Naive thymus-derived CD4-positive, alpha-beta T cell (primary cell): ENCODE measurements at regions of chr11 and their contacts with region 1.

Region 1: GRCh38 chr11:16738193-16738946 is at the start of gene C11orf58:
- DNase-seq: peak; percentile 87 to 98 (median 97)
- ATAC-seq: peak; percentile 97
- H3K4me3 ChIP-seq: peak within 1 kb of the TSS; percentile 92
- H3K4me3 Mint-ChIP-seq: peak within 1 kb of the TSS in 5 of 10 donors; percentile 72 to 87 (median 77)
- H3K27ac ChIP-seq: peak within 1 kb of the TSS; percentile 98
- H3K27ac Mint-ChIP-seq: peak within 1 kb of the TSS in 2 of 9 donors; percentile 83 to 97
- H3K4me1 ChIP-seq: peaks cover 28 to 33% of the 10 kb centered on the region in 2 donors
- H3K4me1 Mint-ChIP-seq: peaks cover 6 to 32% (median 21%) of the 10 kb centered on the region in 7 donors
- H3K27me3 ChIP-seq: no peaks in the 10 kb centered on the region
- H3K27me3 Mint-ChIP-seq: peaks cover 0 to 3% (median 0%) of the 10 kb centered on the region in 5 donors
- total RNA-seq, gene C11orf58: 116 to 168 (median 155) TPM

Region 2: GRCh38 chr11:16605894-16606783 is 132.2 kb before region 1 on chr11:
- CTCF ChIA-PET with region 1: no interaction called
- POLR2A ChIA-PET with region 1: interaction called, 5 read pairs
- intact Hi-C with region 1: loop called in 1 of 2 experiments (anchors 1 kb)
- DNase-seq: peak; percentile 57 to 85 (median 79)
- ATAC-seq: peak; percentile 95
- H3K4me3 ChIP-seq: peak overlapping the region; percentile 49
- H3K4me3 Mint-ChIP-seq: peak overlapping the region in 8 of 10 donors; percentile 75 to 90 (median 84)
- H3K27ac ChIP-seq: no peak overlapping the region
- H3K27ac Mint-ChIP-seq: peak overlapping the region in 7 of 9 donors; percentile 11 to 83 (median 34)
- H3K4me1 ChIP-seq: peaks cover 12 to 27% of the 10 kb centered on the region in 2 donors
- H3K4me1 Mint-ChIP-seq: peaks cover 12 to 33% (median 28%) of the 10 kb centered on the region in 7 donors
- H3K27me3 ChIP-seq: peaks cover 6 to 38% of the 10 kb centered on the region in 2 donors
- H3K27me3 Mint-ChIP-seq: peaks cover 47 to 51% (median 50%) of the 10 kb centered on the region in 5 donors

Region 3: DNA sequence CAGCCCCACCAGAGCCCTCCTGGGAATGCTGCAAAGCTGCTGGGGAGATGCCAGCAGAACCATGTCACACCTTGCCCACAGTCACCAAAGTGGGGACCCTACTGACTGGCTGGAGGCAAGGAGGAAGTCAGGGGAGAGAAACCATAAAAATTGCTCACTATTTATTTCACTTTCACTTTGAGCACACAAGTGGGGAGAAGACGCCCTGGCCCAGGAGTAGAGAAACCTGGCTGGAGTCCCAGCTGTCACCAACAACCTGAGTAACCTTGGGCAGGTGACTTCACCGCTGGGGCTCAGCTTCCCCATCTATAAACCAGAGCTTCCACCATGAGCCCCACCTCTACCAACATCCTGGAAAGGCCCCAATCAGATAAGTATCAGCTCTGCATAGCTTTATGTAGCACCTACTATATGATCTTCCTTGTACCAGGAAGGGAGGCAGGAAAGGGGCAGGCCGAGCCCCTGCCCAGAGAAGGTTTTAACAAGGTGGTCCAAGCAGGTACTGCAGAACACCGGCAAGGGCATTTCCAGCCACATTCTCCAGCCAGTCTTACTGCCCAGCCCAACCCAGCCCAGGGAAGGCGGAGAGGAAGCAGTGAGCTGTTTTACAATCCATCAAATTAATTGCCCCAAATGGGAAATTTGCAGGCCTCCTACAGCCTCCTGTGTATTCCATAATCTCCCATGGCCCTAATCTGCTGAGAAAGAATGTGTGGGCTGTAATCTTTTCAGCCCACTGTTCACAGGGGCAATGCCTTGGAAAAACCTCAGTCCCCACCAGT is 248.3 kb after region 1 on chr11:
- CTCF ChIA-PET with region 1: no interaction called
- POLR2A ChIA-PET with region 1: no interaction called
- intact Hi-C with region 1: loop called in 1 of 2 experiments (anchors 1 kb)
- DNase-seq: peak in 7 of 9 donors; percentile 6 to 42 (median 24)
- ATAC-seq: peak; percentile 76
- H3K4me3 ChIP-seq: peak overlapping the region; percentile 27
- H3K4me3 Mint-ChIP-seq: peak overlapping the region in 9 of 10 donors; percentile 9 to 63 (median 56)
- H3K27ac ChIP-seq: no peak overlapping the region
- H3K27ac Mint-ChIP-seq: peak overlapping the region; percentile 56 to 86 (median 71)
- H3K4me1 ChIP-seq: peaks cover 9 to 15% of the 10 kb centered on the region in 2 donors
- H3K4me1 Mint-ChIP-seq: peaks cover 12 to 33% (median 24%) of the 10 kb centered on the region in 7 donors
- H3K27me3 ChIP-seq: no peaks in the 10 kb centered on the region
- H3K27me3 Mint-ChIP-seq: no peaks in the 10 kb centered on the region

Region 4: GRCh38 chr11:17207317-17208258 is 469.2 kb after region 1 on chr11 and contains the start of gene PIK3C2A:
- CTCF ChIA-PET with region 1: no interaction called
- POLR2A ChIA-PET with region 1: interaction called, 3 read pairs
- intact Hi-C with region 1: loop called (anchors 2 kb)
- DNase-seq: peak; percentile 84 to 94 (median 91)
- ATAC-seq: peak; percentile 98
- H3K4me3 ChIP-seq: peak within 1 kb of the TSS; percentile 93
- H3K4me3 Mint-ChIP-seq: peak within 1 kb of the TSS; percentile 90 to 99 (median 98)
- H3K27ac ChIP-seq: peak within 1 kb of the TSS; percentile 93
- H3K27ac Mint-ChIP-seq: peak within 1 kb of the TSS; percentile 87 to 99 (median 97)
- H3K4me1 ChIP-seq: peaks cover 15 to 19% of the 10 kb centered on the region in 2 donors
- H3K4me1 Mint-ChIP-seq: peaks cover 34 to 57% (median 48%) of the 10 kb centered on the region in 7 donors
- H3K27me3 ChIP-seq: no peaks in the 10 kb centered on the region
- H3K27me3 Mint-ChIP-seq: no peaks in the 10 kb centered on the region
- total RNA-seq, gene PIK3C2A: 25.4 to 56.4 (median 42.0) TPM

Region 5: GRCh38 chr11:17354601-17354991 is 616.2 kb after region 1 on chr11:
- CTCF ChIA-PET with region 1: no interaction called
- POLR2A ChIA-PET with region 1: no interaction called
- intact Hi-C with region 1: loop called in 1 of 2 experiments (anchors 10 kb)
- DNase-seq: peak in 8 of 9 donors; percentile 27 to 55 (median 50)
- ATAC-seq: peak; percentile 43
- H3K4me3 ChIP-seq: no peak overlapping the region
- H3K4me3 Mint-ChIP-seq: peak overlapping the region in 9 of 10 donors; percentile 83 to 95 (median 90)
- H3K27ac ChIP-seq: no peak overlapping the region
- H3K27ac Mint-ChIP-seq: peak overlapping the region in 6 of 9 donors; percentile 29 to 84 (median 60)
- H3K4me1 ChIP-seq: peaks cover 10% of the 10 kb centered on the region in 2 donors
- H3K4me1 Mint-ChIP-seq: peaks cover 28 to 31% (median 29%) of the 10 kb centered on the region in 7 donors
- H3K27me3 ChIP-seq: no peaks in the 10 kb centered on the region
- H3K27me3 Mint-ChIP-seq: peaks cover 0 to 49% (median 0%) of the 10 kb centered on the region in 5 donors